Posterior cingulate gyrus (tissue), 11 donors: ENCODE measurements at regions of chr1 and their contacts with region 1.

Region 1: GRCh38 chr1:6199298-6200187 is at the start of gene RPL22:
- DNase-seq: peak; percentile 96 to 100 (median 98)

Region 2: DNA sequence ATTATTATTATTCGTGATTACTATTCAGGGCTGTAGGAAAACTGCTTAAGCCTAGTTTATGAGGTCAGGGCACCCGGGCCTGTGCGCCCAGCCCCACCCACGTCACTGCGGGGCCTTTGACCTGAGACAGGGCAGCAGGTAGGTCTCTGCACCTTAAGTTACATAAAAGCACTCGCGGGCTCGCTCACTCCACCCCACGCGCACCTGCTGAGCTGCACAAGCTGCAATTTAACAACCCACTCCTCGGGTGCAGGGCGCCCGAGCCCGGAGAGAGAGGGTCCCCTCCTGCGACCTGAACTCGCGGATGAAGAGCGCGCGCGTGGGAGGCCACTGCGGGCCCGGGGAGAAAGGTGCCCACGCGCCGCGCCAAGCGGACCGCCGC is 35.7 kb after region 1 on chr1:
- intact Hi-C with region 1: loop called (anchors 1 kb)
- DNase-seq: no peak